Mucosa of descending colon (tissue), 3 donors: ENCODE measurements at regions of chr2 and their contacts with region 1.

Region 1: DNA sequence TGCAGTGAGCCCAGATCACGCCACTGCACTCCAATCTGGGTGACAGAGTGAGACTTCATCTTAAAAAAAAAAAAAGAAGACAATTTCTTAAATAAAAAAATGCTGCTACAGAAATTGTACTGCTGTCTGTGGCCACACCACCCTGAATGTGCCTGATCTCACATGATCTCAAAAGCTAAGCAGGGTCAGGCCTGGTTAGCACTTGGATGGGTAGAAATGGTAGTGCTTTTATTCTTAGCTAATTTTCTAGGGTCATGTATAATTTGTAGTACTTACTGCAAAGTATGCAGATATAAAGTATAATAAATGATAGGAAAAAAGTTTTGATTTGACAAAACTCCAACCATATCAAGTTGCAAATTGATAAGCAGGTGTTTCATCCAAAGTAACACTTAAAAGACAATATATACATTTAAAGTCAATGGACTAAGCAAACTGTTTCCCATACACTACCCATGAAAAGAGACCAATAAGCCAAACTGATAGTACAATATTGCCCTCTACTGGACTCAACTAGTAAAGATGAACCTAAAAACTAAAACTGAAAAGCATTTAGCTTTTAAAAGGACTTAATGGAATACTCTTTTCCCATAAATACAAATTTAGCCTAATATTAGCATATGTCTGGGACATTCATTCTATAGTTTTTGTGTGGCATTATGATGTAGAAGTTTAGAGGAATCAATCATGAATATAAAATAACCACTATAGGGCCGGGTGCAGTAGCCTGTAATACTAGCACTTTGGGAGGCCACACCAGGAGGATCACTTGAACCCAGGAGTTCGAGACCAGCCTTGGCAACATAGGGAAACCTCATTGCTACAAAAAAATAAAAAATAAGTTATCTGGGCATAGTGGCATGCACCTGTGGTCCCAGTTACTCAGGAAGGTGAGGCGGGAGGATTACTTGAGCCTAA is 18.6 kb upstream of the PEX13 start:
- DNase-seq: no peak
- ATAC-seq: peak; percentile 73
- H3K4me3 ChIP-seq: no peak overlapping the region
- H3K4me1 ChIP-seq: no peaks in the 10 kb centered on the region
- CTCF ChIP-seq: no peak

Region 2: GRCh38 chr2:60707750-60708371 is 291.0 kb before region 1 on chr2:
- intact Hi-C with region 1: loop called (anchors 5 kb)
- DNase-seq: no peak
- ATAC-seq: peak; percentile 63
- H3K4me3 ChIP-seq: no peak overlapping the region
- H3K4me1 ChIP-seq: no peaks in the 10 kb centered on the region
- CTCF ChIP-seq: peak; percentile 41

Region 3: GRCh38 chr2:60818272-60818671 is 180.6 kb before region 1 on chr2:
- intact Hi-C with region 1: loop called in 1 of 2 experiments (anchors 10 kb)
- DNase-seq: peak in 1 of 3 donors; percentile 16
- ATAC-seq: peak; percentile 14
- H3K4me3 ChIP-seq: no peak overlapping the region
- H3K4me1 ChIP-seq: no peaks in the 10 kb centered on the region
- CTCF ChIP-seq: no peak

Region 4: DNA sequence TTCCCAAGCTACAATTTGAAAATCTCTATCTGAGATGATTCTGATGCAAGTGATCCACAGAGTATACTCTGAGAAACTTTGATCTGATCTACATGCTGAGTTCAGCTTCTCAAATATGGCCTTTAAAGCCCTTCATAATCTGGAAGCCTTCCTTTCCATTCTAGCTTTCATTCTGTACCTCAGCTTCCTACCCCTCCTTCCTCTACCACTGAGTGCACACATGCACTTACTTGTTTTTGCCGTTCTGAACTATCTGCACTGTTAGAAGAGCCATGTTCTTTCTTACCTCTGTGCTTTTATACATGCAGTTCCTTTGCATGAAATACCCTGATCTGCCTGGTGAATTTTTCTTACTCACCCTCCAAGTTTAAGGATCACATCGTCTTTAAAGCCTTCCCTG is 92.5 kb before region 1 on chr2:
- intact Hi-C with region 1: no loop called
- DNase-seq: no peak
- ATAC-seq: no peak
- H3K4me3 ChIP-seq: no peak overlapping the region
- H3K4me1 ChIP-seq: no peaks in the 10 kb centered on the region
- CTCF ChIP-seq: no peak

Region 5: GRCh38 chr2:61144697-61145268 is 145.9 kb after region 1 on chr2:
- intact Hi-C with region 1: no loop called
- DNase-seq: peak; percentile 84 to 92 (median 89)
- ATAC-seq: peak; percentile 98
- H3K4me3 ChIP-seq: no peak overlapping the region
- H3K4me1 ChIP-seq: no peaks in the 10 kb centered on the region
- CTCF ChIP-seq: no peak